GM23248 (cell line): ENCODE measurements at regions of chr1 and their contacts with region 1.

Region 1: GRCh38 chr1:202710070-202711045 is at the start of gene SYT2:
- DNase-seq: peak; percentile 41
- H3K4me3 ChIP-seq: peak within 1 kb of the TSS; percentile 32
- H3K27ac ChIP-seq: no peak within 1 kb of the TSS
- H3K4me1 ChIP-seq: no peaks in the 10 kb centered on the region
- H3K27me3 ChIP-seq: peaks cover 87% of the 10 kb centered on the region
- total RNA-seq, gene SYT2: not detected in 2 replicates

Region 2: DNA sequence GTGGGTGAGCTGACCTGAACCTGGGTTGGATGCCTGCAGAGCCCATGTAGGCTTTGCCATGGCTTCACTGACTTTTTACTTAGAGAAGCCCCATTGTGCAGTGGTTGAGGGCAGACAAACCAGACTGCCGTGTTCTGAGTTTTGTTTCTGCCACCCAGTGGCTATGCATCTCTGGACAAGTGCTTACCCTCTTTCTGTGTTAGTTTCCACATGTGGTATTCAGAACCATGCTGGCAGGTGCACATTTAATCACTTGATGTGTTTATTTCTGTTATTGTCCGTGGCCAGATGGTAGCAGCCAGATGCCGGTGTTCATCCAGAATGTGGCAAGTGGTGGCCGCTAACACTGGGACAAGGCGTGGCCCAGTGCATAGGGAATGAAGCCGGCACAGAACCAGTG is 539.6 kb before region 1 on chr1:
- in situ Hi-C with region 1: loop called (anchors 10 kb)
- DNase-seq: no peak
- H3K4me3 ChIP-seq: no peak overlapping the region
- H3K27ac ChIP-seq: no peak overlapping the region
- H3K4me1 ChIP-seq: peaks cover 7% of the 10 kb centered on the region; the same call in 1 of the 2 replicates
- H3K27me3 ChIP-seq: no peaks in the 10 kb centered on the region

Region 3: DNA sequence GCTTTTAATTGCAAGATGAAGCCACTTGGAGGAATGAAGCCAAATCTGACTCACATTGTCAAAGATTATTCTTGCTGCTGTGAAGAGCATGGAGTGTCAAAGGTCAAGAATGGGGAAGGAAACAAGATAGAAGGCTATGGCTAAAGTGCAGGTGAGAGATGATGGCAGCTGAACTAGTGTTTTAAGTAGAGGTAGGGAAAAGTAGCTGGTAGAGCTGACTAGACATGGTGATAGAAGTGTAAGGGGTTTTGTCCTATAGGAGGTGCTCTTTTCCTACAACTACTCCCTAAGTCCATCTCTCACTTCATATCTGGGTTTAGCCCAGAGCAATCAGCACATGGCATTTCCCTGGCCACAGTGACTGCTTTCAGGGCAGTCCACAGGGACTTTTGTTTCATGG is 380.5 kb before region 1 on chr1:
- in situ Hi-C with region 1: loop called (anchors 10 kb)
- DNase-seq: no peak
- H3K4me3 ChIP-seq: no peak overlapping the region
- H3K27ac ChIP-seq: no peak overlapping the region
- H3K4me1 ChIP-seq: no peaks in the 10 kb centered on the region
- H3K27me3 ChIP-seq: no peaks in the 10 kb centered on the region

Region 4: GRCh38 chr1:202438432-202439174 is 271.8 kb before region 1 on chr1:
- in situ Hi-C with region 1: no loop called
- DNase-seq: no peak
- H3K4me3 ChIP-seq: no peak overlapping the region
- H3K27ac ChIP-seq: no peak overlapping the region
- H3K4me1 ChIP-seq: no peaks in the 10 kb centered on the region
- H3K27me3 ChIP-seq: no peaks in the 10 kb centered on the region

Region 5: GRCh38 chr1:202462342-202463076 is 247.8 kb before region 1 on chr1:
- in situ Hi-C with region 1: loop called (anchors 10 kb)
- DNase-seq: no peak
- H3K4me3 ChIP-seq: no peak overlapping the region
- H3K27ac ChIP-seq: no peak overlapping the region
- H3K4me1 ChIP-seq: peaks cover 23% of the 10 kb centered on the region
- H3K27me3 ChIP-seq: no peaks in the 10 kb centered on the region

Region 6: DNA sequence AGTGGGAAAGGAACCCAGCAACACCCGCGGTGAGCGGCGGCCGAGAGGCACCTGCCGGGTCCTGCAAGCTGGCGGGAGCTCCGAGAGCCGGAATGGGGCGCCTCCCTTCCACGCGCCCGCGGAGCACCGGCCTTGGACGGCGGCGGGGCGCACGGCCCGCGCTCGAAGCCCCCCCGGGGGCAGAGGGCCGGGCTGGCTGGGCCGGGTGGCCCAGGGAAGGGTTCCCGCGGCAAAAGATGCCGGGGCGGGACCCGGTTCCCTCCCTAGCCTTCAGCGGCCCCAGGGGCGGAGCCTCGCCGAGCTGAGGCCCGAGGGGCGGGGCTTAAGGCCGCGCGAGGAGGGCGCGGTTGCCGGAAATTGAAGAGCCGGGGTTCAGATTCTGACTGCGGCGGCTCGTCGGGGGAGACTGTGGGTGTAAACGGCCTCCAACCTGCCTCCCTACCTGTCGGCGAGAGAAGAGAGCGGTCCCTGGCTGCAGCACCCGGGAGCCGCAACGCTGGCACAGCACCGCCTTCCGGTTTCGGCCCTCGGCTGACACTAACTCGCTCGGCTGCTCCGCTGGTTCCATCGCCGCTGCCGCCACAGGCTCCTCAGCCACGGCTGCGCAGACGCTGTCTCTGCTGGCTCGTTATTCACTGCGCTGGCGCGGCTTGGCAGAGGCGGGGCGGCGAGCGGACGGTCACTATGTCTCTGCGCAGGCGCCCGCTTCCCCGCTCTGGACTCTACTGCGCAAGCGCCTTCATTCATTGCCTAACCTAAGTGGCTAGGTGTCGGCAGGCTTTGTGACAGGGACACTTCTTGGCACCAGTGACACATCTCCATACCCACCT is 178.4 kb after region 1 on chr1 and contains the start of gene RABIF:
- in situ Hi-C with region 1: no loop called
- DNase-seq: peak; percentile 99
- H3K4me3 ChIP-seq: peak within 1 kb of the TSS; percentile 85
- H3K27ac ChIP-seq: peak within 1 kb of the TSS; percentile 71
- H3K4me1 ChIP-seq: peaks cover 6% of the 10 kb centered on the region; the same call in 1 of the 2 replicates
- H3K27me3 ChIP-seq: no peaks in the 10 kb centered on the region
- total RNA-seq, gene RABIF: 5.2 and 7.2 TPM in 2 replicates